ENCODE measurements at regions of chr1 and their contacts with region 1.

Region 1: GRCh38 chr1:206925106-206925736 is 3.5 kb upstream of the FCMR start:
- DNase-seq: peak in 33 of 35 experiments; percentile 40 to 81 (median 57)
- ATAC-seq: peak; percentile 16 to 36 (median 22)
- H3K4me3 ChIP-seq: no peak overlapping the region
- H3K4me3 Mint-ChIP-seq: no peak overlapping the region
- H3K27ac ChIP-seq: peak overlapping the region; percentile 89
- H3K27ac Mint-ChIP-seq: no peak overlapping the region
- H3K4me1 ChIP-seq: peaks cover 30 to 59% of the 10 kb centered on the region in 2 experiments
- H3K4me1 Mint-ChIP-seq: peaks cover 30 to 35% (median 32%) of the 10 kb centered on the region in 3 donors
- H3K27me3 ChIP-seq: no peaks in the 10 kb centered on the region
- H3K27me3 Mint-ChIP-seq: no peaks in the 10 kb centered on the region

Region 2: GRCh38 chr1:206672844-206673758 is 252.1 kb before region 1 on chr1:
- CTCF ChIA-PET with region 1: no interaction called
- POLR2A ChIA-PET with region 1: no interaction called
- DNase-seq: no peak
- ATAC-seq: no peak
- H3K4me3 ChIP-seq: no peak overlapping the region
- H3K4me3 Mint-ChIP-seq: no peak overlapping the region
- H3K27ac ChIP-seq: no peak overlapping the region
- H3K27ac Mint-ChIP-seq: no peak overlapping the region
- H3K4me1 ChIP-seq: peaks cover 0 to 9% of the 10 kb centered on the region in 2 experiments
- H3K4me1 Mint-ChIP-seq: peaks cover 4 to 6% (median 5%) of the 10 kb centered on the region in 3 donors
- H3K27me3 ChIP-seq: no peaks in the 10 kb centered on the region
- H3K27me3 Mint-ChIP-seq: no peaks in the 10 kb centered on the region

Region 3: GRCh38 chr1:206684478-206685333 is 240.5 kb before region 1 on chr1 and contains the start of gene MAPKAPK2:
- CTCF ChIA-PET with region 1: no interaction called
- POLR2A ChIA-PET with region 1: interaction called in 1 of 2 experiments, 12 read pairs
- DNase-seq: peak; percentile 34 to 85 (median 63)
- ATAC-seq: peak; percentile 80 to 85 (median 82)
- H3K4me3 ChIP-seq: peak within 1 kb of the TSS; percentile 92 to 99
- H3K4me3 Mint-ChIP-seq: peak within 1 kb of the TSS; percentile 97 to 99 (median 99)
- H3K27ac ChIP-seq: peak within 1 kb of the TSS; percentile 88
- H3K27ac Mint-ChIP-seq: peak within 1 kb of the TSS; percentile 88 to 89
- H3K4me1 ChIP-seq: peaks cover 10 to 34% of the 10 kb centered on the region in 2 experiments
- H3K4me1 Mint-ChIP-seq: peaks cover 36 to 49% (median 41%) of the 10 kb centered on the region in 3 donors
- H3K27me3 ChIP-seq: peaks cover 0 to 14% of the 10 kb centered on the region in 2 experiments
- H3K27me3 Mint-ChIP-seq: peaks cover 0 to 5% of the 10 kb centered on the region in 2 donors
- total RNA-seq, gene MAPKAPK2: 64.3 to 117 (median 78.4) TPM

Region 4: DNA sequence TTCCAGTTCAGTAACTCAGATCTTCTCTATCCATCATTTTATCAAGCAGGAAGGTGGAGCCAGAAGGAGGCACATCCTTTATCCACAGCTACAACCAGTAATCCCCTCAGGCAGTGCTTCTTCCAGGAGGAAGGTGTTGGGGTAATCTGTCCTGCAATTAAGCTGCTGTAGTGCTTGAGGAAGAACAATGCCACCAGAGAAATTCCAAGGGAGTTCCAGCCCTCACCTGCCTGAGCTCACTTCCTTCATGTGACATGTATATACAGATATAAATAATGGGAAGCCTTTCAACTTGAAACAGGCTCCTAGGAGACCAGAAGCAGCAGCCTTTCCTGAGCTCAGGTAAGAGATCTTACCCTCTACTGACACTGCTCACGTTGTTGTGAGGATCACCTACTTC is 62.0 kb before region 1 on chr1:
- CTCF ChIA-PET with region 1: no interaction called
- POLR2A ChIA-PET with region 1: no interaction called
- DNase-seq: no peak
- ATAC-seq: no peak
- H3K4me3 ChIP-seq: no peak overlapping the region
- H3K4me3 Mint-ChIP-seq: no peak overlapping the region
- H3K27ac ChIP-seq: no peak overlapping the region
- H3K27ac Mint-ChIP-seq: no peak overlapping the region
- H3K4me1 ChIP-seq: peaks cover 6 to 14% of the 10 kb centered on the region in 2 experiments
- H3K4me1 Mint-ChIP-seq: peaks cover 8 to 23% (median 21%) of the 10 kb centered on the region in 3 donors
- H3K27me3 ChIP-seq: peaks cover 0 to 2% of the 10 kb centered on the region in 2 experiments
- H3K27me3 Mint-ChIP-seq: peaks cover 4 to 10% of the 10 kb centered on the region in 2 donors

Region 5: GRCh38 chr1:206935491-206936067 is 10.4 kb after region 1 on chr1:
- CTCF ChIA-PET with region 1: interaction called, 11 to 12 read pairs
- POLR2A ChIA-PET with region 1: no interaction called
- DNase-seq: peak in 17 of 35 experiments; percentile 20 to 59 (median 38)
- ATAC-seq: peak in 2 of 4 experiments; percentile 50 to 72
- H3K4me3 ChIP-seq: no peak overlapping the region
- H3K4me3 Mint-ChIP-seq: no peak overlapping the region
- H3K27ac ChIP-seq: no peak overlapping the region
- H3K27ac Mint-ChIP-seq: no peak overlapping the region
- H3K4me1 ChIP-seq: peaks cover 2 to 27% of the 10 kb centered on the region in 2 experiments
- H3K4me1 Mint-ChIP-seq: peaks cover 26 to 31% (median 29%) of the 10 kb centered on the region in 3 donors
- H3K27me3 ChIP-seq: no peaks in the 10 kb centered on the region
- H3K27me3 Mint-ChIP-seq: no peaks in the 10 kb centered on the region

Region 6: GRCh38 chr1:206975306-206975705 is 50.1 kb after region 1 on chr1:
- CTCF ChIA-PET with region 1: no interaction called
- POLR2A ChIA-PET with region 1: no interaction called
- DNase-seq: no peak
- ATAC-seq: no peak
- H3K4me3 ChIP-seq: no peak overlapping the region
- H3K4me3 Mint-ChIP-seq: no peak overlapping the region
- H3K27ac ChIP-seq: no peak overlapping the region
- H3K27ac Mint-ChIP-seq: no peak overlapping the region
- H3K4me1 ChIP-seq: no peaks in the 10 kb centered on the region
- H3K4me1 Mint-ChIP-seq: no peaks in the 10 kb centered on the region
- H3K27me3 ChIP-seq: peaks cover 0 to 2% of the 10 kb centered on the region in 2 experiments
- H3K27me3 Mint-ChIP-seq: peaks cover 0 to 3% of the 10 kb centered on the region in 2 donors

Region 7: DNA sequence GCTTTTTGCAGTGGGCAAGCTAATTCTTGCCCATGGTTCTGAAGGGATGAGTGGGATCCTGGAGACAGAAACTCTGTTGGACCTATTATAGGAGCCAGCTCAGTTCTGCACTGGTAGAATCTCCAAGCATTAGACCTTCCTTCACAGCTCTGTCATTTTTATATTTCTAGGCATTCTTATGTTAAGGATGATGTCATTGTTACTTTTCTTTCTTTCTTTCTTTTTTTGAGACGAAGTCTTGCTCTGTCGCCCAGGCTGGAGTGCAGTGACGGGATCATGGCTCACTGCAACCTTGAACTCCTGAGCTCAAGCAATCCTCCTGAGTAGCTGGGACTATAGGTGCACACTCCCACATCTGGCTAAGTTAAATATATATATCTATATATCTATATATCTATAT is 135.4 kb after region 1 on chr1:
- CTCF ChIA-PET with region 1: interaction called in 1 of 2 experiments, 10 read pairs
- POLR2A ChIA-PET with region 1: no interaction called
- DNase-seq: no peak
- ATAC-seq: no peak
- H3K4me3 ChIP-seq: no peak overlapping the region
- H3K4me3 Mint-ChIP-seq: no peak overlapping the region
- H3K27ac ChIP-seq: no peak overlapping the region
- H3K27ac Mint-ChIP-seq: no peak overlapping the region
- H3K4me1 ChIP-seq: no peaks in the 10 kb centered on the region
- H3K4me1 Mint-ChIP-seq: no peaks in the 10 kb centered on the region
- H3K27me3 ChIP-seq: peaks cover 0 to 2% of the 10 kb centered on the region in 2 experiments
- H3K27me3 Mint-ChIP-seq: no peaks in the 10 kb centered on the region